Body of pancreas (tissue), 4 donors: ENCODE measurements at regions of chr2 and their contacts with region 1.

Region 1: DNA sequence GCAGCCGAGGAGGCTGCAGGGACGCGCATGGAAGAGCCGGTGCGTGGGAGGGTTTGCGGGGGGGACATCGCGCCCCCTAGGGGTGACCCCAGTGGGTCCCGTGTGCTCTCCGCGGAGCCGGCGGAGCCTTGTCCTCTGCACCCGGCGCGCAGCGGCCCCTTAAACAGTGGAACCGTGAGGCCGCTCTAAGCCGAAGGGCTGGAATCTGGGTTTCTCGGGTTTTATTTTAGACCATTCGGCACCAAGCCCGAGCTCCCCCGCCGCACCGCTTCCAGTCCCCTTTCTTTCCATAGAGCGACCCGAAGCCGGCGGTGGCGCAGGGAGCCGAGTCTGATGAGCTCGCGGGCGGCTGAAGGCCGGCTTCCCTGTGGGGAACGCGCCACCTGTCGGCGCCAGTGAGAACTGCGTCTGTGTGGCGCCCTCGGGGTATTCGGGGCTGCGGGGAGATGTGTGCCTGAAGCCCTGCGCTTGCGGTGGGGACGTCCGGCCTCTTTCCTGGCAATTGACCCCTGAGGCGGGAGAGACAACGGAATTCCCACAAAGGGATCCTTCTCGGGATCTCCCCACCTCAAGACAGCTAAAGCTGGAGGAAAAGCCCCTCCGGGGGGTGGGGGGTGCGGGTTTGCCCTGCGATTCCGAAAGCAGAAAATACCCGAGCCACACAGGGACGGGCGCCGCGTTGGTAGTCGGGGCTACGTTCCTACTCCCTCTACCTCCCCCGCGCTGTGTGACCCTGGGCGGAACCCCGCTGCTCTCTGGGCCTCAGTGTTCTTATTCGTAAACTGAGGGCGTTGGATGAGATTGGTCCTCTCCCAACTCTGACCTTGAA is 8.2 kb upstream of the EN1 start:
- DNase-seq: peak; percentile 75 to 86 (median 82)
- ATAC-seq: peak; percentile 90
- H3K4me3 ChIP-seq: no peak overlapping the region
- H3K27ac ChIP-seq: no peak overlapping the region
- H3K4me1 ChIP-seq: peaks cover 42% of the 10 kb centered on the region
- H3K27me3 ChIP-seq: peaks cover 4 to 69% of the 10 kb centered on the region in 2 donors
- CTCF ChIP-seq: peak; percentile 92 to 97 (median 95)
- POLR2A ChIP-seq: no peak

Region 2: DNA sequence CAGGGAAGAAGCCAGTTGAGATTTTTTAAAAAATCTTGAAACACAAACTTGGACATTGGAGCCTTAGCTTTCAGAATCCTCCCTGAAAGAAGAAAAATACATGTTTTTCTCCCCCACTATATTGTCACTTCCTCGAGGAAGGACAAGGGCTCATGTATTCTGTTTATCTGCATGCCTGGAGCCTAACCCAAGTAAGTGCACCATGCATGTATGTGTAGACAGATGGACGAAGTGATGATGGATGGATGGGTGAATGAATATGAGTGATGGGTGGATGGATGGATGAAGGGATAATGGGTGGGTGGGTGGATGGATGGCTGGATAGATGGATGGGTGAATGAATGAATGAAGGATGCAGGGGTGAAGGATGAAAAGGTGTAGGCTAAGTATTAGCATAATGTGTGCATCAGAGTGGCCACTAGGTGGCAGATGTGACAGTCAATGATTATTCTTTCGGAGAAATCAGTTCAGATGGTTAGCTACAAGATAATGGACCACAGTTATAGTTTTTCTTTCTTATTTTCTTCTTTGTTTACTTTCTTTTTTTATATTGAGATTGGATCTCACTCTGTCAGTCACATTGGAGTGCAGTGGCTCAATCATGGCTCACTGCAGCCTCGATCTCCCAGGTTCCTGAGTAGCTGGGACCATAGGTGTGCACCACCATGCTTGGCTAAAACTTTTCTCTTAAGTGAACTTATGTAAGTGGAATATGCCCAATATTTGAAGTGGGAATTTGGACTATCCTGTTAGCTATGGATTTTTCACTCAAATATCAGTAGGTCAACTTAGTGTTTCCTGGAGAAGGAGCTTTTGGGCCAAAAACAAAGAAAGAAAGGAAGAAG is 823.3 kb before region 1 on chr2:
- intact Hi-C with region 1: loop called (anchors 5 kb)
- DNase-seq: peak; percentile 53 to 64 (median 55)
- ATAC-seq: peak; percentile 70
- H3K4me3 ChIP-seq: no peak overlapping the region
- H3K27ac ChIP-seq: no peak overlapping the region
- H3K4me1 ChIP-seq: no peaks in the 10 kb centered on the region
- H3K27me3 ChIP-seq: no peaks in the 10 kb centered on the region
- CTCF ChIP-seq: peak in 6 of 7 experiments; percentile 65 to 86 (median 78)
- POLR2A ChIP-seq: no peak

Region 3: DNA sequence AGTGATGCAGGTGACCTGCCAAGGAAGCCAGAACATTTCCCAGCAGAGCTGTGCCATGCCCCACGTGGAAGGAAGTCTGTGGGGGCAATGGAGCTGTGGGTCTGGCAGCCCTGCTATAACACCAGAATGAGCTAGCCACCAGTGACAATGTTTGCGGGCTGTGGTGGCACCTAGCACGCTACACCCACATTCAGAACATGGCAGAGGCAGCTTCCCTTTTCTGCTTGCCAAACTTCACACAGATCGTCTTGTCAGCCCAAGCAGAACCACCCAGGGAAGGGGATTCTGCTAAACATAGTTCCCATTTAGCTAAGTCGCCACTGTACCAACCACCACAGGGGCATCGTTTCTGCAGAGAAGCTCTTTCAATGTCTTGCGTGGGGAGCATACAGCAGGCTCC is 814.8 kb before region 1 on chr2:
- intact Hi-C with region 1: loop called (anchors 5 kb)
- DNase-seq: no peak
- ATAC-seq: no peak
- H3K4me3 ChIP-seq: no peak overlapping the region
- H3K27ac ChIP-seq: no peak overlapping the region
- H3K4me1 ChIP-seq: no peaks in the 10 kb centered on the region
- H3K27me3 ChIP-seq: no peaks in the 10 kb centered on the region
- CTCF ChIP-seq: no peak
- POLR2A ChIP-seq: no peak

Region 4: GRCh38 chr2:118221666-118222594 is 633.7 kb before region 1 on chr2:
- intact Hi-C with region 1: loop called (anchors 10 kb)
- DNase-seq: peak; percentile 51 to 72 (median 57)
- ATAC-seq: peak; percentile 92
- H3K4me3 ChIP-seq: no peak overlapping the region
- H3K27ac ChIP-seq: no peak overlapping the region
- H3K4me1 ChIP-seq: peaks cover 16% of the 10 kb centered on the region
- H3K27me3 ChIP-seq: peaks cover 0 to 26% of the 10 kb centered on the region in 2 donors
- CTCF ChIP-seq: peak; percentile 30 to 81 (median 77)
- POLR2A ChIP-seq: no peak

Region 5: DNA sequence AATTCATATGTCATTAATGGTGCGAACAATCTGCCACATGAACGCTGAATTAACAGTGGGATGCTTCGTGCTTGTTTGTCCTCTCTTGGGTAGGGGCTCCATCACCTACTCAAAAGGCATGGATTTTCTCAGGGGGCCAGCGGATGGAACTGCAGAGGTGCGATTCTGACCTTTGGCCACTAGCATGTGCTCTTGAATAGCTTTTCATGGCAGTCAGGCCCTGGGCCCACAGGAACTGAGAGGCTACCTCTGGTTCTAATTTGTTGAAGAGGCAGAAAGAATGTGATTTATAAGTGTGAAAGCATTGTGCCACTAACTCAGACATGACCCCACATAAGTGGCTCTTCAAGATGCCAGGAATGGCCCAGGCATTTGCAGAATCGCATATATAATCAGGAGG is 484.1 kb before region 1 on chr2:
- intact Hi-C with region 1: loop called (anchors 5 kb)
- DNase-seq: peak; percentile 27 to 58 (median 36)
- ATAC-seq: no peak
- H3K4me3 ChIP-seq: no peak overlapping the region
- H3K27ac ChIP-seq: no peak overlapping the region
- H3K4me1 ChIP-seq: no peaks in the 10 kb centered on the region
- H3K27me3 ChIP-seq: no peaks in the 10 kb centered on the region
- CTCF ChIP-seq: peak; percentile 12 to 70 (median 55)
- POLR2A ChIP-seq: no peak